Vagina (tissue), 2 donors: ENCODE measurements at regions of chr1 and their contacts with region 1.

Region 1: DNA sequence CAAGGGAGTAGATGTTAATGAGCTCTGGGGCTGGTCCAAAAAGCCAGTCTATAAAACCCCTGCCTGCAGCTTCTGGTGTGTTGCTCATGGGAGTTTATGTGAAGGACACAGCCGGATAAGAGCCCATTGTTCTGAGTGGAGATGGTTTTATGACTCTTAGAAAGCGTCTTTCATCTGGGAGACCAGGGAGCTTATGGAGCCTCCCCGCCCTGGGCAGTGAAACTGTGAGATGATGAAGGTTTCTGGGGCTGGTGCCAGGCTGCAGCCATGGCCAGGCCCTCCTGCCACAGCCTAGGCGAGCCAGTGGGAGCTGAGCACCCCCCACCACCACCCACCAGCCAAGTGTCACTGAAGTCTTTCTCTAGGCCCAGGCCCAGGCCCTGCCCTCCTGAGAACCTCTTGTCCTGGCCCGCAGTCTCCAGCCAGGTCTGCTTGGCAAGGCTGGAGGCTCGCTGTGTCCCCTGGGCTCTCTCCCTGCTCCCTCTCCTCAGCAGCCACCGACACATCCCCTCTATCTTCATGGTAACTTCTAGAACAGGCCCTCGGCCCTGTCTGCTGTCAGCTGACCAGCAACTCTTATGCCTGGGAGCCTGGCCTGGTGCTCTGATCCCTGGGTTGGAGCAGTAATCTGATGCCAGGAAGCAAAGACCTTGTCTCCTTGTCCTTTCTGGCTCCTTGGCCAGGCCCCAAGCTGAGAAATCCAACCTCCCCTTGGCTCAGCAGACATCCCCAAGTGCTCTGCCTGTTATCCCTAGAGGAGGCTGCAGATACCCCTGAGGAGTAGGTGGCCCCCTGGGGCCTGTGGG is 7.6 kb upstream of the ARHGEF10L start:
- DNase-seq: no peak
- H3K4me3 ChIP-seq: no peak overlapping the region
- H3K27ac ChIP-seq: peak overlapping the region; percentile 89
- H3K4me1 ChIP-seq: peaks cover 45% of the 10 kb centered on the region
- H3K27me3 ChIP-seq: no peaks in the 10 kb centered on the region
- CTCF ChIP-seq: no peak
- POLR2A ChIP-seq: no peak

Region 2: GRCh38 chr1:17381161-17381560 is 150.7 kb before region 1 on chr1:
- intact Hi-C with region 1: no loop called
- DNase-seq: no peak
- H3K4me3 ChIP-seq: no peak overlapping the region
- H3K27ac ChIP-seq: no peak overlapping the region
- H3K4me1 ChIP-seq: no peaks in the 10 kb centered on the region
- H3K27me3 ChIP-seq: no peaks in the 10 kb centered on the region
- CTCF ChIP-seq: no peak
- POLR2A ChIP-seq: no peak

Region 3: DNA sequence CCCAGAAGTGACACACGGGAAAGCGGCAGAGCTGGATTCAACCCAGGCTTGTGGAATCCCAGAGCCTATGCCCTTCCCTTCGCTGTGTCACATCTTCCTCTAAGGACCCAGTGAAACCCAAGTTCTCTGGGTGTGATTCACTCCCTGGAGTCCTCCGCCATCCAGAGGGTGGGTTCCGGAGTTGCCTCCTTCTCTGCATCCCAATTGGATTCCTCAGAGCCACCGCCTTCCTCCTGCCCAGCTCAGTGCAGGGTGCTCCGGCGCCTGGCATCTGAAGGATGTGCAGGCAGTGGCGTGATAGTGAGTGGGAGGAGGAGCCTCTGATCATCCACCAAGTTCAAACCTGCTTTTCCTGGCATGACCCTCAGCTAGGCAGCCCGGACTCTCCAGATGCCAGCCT is 71.6 kb before region 1 on chr1:
- intact Hi-C with region 1: no loop called
- DNase-seq: no peak
- H3K4me3 ChIP-seq: no peak overlapping the region
- H3K27ac ChIP-seq: no peak overlapping the region
- H3K4me1 ChIP-seq: no peaks in the 10 kb centered on the region
- H3K27me3 ChIP-seq: no peaks in the 10 kb centered on the region
- CTCF ChIP-seq: no peak
- POLR2A ChIP-seq: no peak

Region 4: GRCh38 chr1:17569200-17570161 is 37.6 kb after region 1 on chr1:
- intact Hi-C with region 1: loop called (anchors 2 kb)
- DNase-seq: peak in 1 of 2 donors; percentile 96
- H3K4me3 ChIP-seq: peak overlapping the region in 1 of 2 donors; percentile 17
- H3K27ac ChIP-seq: peak overlapping the region; percentile 98
- H3K4me1 ChIP-seq: peaks cover 93% of the 10 kb centered on the region
- H3K27me3 ChIP-seq: no peaks in the 10 kb centered on the region
- CTCF ChIP-seq: no peak
- POLR2A ChIP-seq: peak in 1 of 2 donors; percentile 15